ENCODE measurements at regions of chr18 and their contacts with region 1.

Region 1: DNA sequence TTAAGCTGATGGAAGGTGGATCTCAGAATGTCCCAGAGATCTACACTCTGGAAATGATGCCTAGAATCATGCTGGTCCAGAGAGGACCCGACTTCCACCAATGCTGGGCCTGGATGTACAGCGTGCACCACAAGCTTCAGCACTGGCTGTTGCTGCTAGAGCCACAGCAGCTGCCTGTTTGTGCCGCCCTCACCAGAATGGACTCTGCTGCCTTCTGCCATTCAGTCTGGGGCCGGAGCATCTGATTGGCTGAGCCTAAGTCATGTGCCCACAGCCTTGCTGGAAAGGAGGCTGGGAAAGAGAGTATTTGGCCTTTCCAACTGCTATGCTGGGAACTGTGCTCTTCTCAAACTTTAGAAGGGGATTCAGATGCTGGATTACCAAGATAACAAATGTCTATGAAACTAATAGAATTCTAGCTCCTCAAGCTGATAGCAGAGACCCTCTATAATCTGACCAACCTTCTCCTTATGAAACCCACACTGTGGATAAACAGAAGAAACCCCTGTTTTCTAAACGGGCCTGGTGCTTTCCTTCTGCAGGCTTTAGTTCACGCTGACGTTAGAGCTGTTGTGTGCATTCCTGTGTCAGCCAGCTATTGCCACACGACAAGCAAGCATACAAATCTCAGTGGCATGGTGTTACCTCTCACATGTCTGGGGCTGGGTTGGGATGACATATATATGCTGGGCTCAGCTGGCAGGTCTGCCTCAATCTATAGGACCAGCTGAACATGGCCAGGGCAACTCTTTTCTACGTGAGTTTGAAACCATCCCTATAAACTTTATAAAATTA is 4.1 kb upstream of the LOXHD1 start:
- DNase-seq: no peak
- H3K4me3 ChIP-seq: no peak overlapping the region
- H3K4me3 Mint-ChIP-seq: no peak overlapping the region
- H3K27ac ChIP-seq: no peak overlapping the region
- H3K27ac Mint-ChIP-seq: no peak overlapping the region
- H3K4me1 ChIP-seq: no peaks in the 10 kb centered on the region
- H3K4me1 Mint-ChIP-seq: no peaks in the 10 kb centered on the region
- H3K27me3 ChIP-seq: no peaks in the 10 kb centered on the region
- H3K27me3 Mint-ChIP-seq: peaks cover 0 to 3% of the 10 kb centered on the region in 2 donors

Region 2: DNA sequence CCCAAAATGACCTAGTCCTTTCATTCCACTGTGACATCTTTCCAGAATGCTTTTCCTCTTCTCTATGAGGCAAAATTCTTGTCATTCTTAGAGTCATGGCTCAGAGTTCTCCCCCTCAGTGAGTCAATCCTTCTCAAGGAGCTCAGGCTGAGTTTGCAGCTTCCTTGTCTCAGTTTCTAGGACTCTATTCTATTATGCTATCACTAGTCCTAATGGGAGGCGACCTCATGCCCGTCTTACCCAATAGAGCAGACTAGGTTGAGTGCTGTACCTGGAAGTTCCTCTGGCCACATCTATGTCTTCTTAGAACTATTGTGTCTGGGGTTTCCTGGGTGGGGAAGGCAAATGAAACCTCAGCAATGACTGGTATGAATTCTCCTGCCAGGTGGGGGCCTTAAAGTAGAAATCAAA is 505.5 kb before region 1 on chr18:
- CTCF ChIA-PET with region 1: interaction called, 190 read pairs
- POLR2A ChIA-PET with region 1: no interaction called
- intact Hi-C with region 1: no loop called
- DNase-seq: peak; percentile 53 to 65 (median 57)
- H3K4me3 ChIP-seq: peak overlapping the region in 1 of 2 donors; percentile 21
- H3K4me3 Mint-ChIP-seq: peak overlapping the region; percentile 16 to 84 (median 80)
- H3K27ac ChIP-seq: peak overlapping the region; percentile 56
- H3K27ac Mint-ChIP-seq: peak overlapping the region; percentile 60 to 97 (median 86)
- H3K4me1 ChIP-seq: peaks cover 92% of the 10 kb centered on the region
- H3K4me1 Mint-ChIP-seq: peaks cover 43 to 86% (median 70%) of the 10 kb centered on the region in 4 donors
- H3K27me3 ChIP-seq: no peaks in the 10 kb centered on the region
- H3K27me3 Mint-ChIP-seq: no peaks in the 10 kb centered on the region

Region 3: DNA sequence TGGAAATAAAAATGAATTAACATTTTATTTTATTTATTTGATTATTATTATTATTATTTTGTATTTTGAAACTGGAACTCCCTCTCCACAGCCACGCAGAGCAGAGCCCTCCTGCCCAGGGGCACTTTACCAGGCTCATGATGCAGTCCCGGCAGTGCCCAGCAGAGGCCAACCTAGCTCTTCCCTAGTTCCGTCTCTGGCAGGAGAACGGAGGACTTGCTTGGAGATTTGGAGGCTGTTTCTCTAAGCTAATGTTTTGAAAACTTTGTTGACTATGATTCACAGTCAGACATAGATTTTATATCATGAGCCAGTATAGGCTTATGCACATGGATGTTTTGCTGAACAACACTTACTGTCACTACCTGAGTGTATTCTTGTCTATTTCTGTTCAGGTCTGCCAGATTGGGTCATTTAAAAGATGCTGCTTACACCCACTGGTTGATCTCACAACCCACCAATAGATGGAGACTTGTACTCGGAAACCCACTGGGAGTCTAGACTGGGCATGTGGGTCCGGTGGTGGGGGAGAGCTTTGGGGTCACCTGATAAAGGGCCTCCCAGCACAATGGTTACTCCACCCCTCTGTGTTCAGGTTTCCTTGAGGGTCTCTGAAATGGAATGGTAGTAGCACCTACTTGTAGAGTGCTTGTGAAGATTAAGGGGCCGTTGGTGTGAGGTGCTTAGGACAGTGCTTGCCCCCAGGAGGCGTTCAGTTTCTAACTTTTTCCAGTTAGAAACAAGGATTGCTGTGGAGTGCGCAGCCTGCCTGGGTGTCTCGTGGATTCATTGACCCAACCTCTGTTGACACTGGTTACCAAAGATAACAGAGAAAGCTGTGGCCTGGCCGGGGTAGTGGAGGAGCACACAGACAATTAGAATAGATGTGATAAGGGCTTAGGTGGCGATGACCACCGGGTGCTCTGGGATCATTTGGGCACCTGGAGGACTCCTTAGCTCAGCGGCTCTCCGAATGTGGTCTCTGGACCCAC is 379.7 kb before region 1 on chr18:
- CTCF ChIA-PET with region 1: interaction called, 56 read pairs
- POLR2A ChIA-PET with region 1: interaction called, 5 read pairs
- intact Hi-C with region 1: no loop called
- DNase-seq: peak; percentile 23 to 56 (median 42)
- H3K4me3 ChIP-seq: no peak overlapping the region
- H3K4me3 Mint-ChIP-seq: no peak overlapping the region
- H3K27ac ChIP-seq: no peak overlapping the region
- H3K27ac Mint-ChIP-seq: no peak overlapping the region
- H3K4me1 ChIP-seq: peaks cover 8% of the 10 kb centered on the region
- H3K4me1 Mint-ChIP-seq: peaks cover 9 to 23% (median 14%) of the 10 kb centered on the region in 4 donors
- H3K27me3 ChIP-seq: no peaks in the 10 kb centered on the region
- H3K27me3 Mint-ChIP-seq: no peaks in the 10 kb centered on the region

Region 4: DNA sequence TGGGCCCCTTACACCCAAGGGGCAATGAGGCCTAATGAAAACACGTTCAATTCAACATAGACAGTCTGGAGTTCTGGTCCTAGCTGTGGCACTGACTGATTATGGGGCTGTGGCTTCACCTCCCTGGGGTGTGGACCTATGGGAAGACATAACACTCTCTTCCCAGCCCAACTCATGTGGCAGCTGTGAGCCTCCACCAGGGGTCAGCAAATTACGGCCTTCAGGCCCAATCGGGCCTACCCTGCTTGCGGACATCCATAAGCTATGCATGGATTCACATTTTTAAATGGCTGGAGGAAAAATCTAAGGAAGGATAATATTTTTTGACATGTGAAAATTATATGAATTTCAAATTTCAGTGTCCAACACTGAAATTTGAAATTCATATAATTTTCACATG is 105.4 kb before region 1 on chr18:
- CTCF ChIA-PET with region 1: interaction called, 10 read pairs
- POLR2A ChIA-PET with region 1: no interaction called
- intact Hi-C with region 1: no loop called
- DNase-seq: no peak
- H3K4me3 ChIP-seq: no peak overlapping the region
- H3K4me3 Mint-ChIP-seq: no peak overlapping the region
- H3K27ac ChIP-seq: no peak overlapping the region
- H3K27ac Mint-ChIP-seq: no peak overlapping the region
- H3K4me1 ChIP-seq: no peaks in the 10 kb centered on the region
- H3K4me1 Mint-ChIP-seq: no peaks in the 10 kb centered on the region
- H3K27me3 ChIP-seq: no peaks in the 10 kb centered on the region
- H3K27me3 Mint-ChIP-seq: no peaks in the 10 kb centered on the region

Region 5: GRCh38 chr18:46672062-46672970 is 11.2 kb after region 1 on chr18:
- CTCF ChIA-PET with region 1: interaction called, 13 read pairs
- POLR2A ChIA-PET with region 1: no interaction called
- intact Hi-C with region 1: no loop called
- DNase-seq: peak in 4 of 5 donors; percentile 20 to 59 (median 51)
- H3K4me3 ChIP-seq: no peak overlapping the region
- H3K4me3 Mint-ChIP-seq: no peak overlapping the region
- H3K27ac ChIP-seq: no peak overlapping the region
- H3K27ac Mint-ChIP-seq: peak overlapping the region in 6 of 7 donors; percentile 17 to 74 (median 57)
- H3K4me1 ChIP-seq: peaks cover 13% of the 10 kb centered on the region
- H3K4me1 Mint-ChIP-seq: peaks cover 11 to 21% (median 13%) of the 10 kb centered on the region in 4 donors
- H3K27me3 ChIP-seq: no peaks in the 10 kb centered on the region
- H3K27me3 Mint-ChIP-seq: peaks cover 3% of the 10 kb centered on the region in 2 donors

Region 6: GRCh38 chr18:47054369-47054768 is 393.2 kb after region 1 on chr18:
- CTCF ChIA-PET with region 1: no interaction called
- POLR2A ChIA-PET with region 1: no interaction called
- intact Hi-C with region 1: no loop called
- DNase-seq: no peak
- H3K4me3 ChIP-seq: no peak overlapping the region
- H3K4me3 Mint-ChIP-seq: no peak overlapping the region
- H3K27ac ChIP-seq: no peak overlapping the region
- H3K27ac Mint-ChIP-seq: no peak overlapping the region
- H3K4me1 ChIP-seq: no peaks in the 10 kb centered on the region
- H3K4me1 Mint-ChIP-seq: peaks cover 0 to 1% (median under 1%) of the 10 kb centered on the region in 4 donors
- H3K27me3 ChIP-seq: no peaks in the 10 kb centered on the region
- H3K27me3 Mint-ChIP-seq: peaks cover 0 to 3% of the 10 kb centered on the region in 2 donors

Measured in CD4-positive, alpha-beta memory T cell (primary cell).